Panc1 (cell line): ENCODE measurements at regions of chr6 and their contacts with region 1.

Region 1: DNA sequence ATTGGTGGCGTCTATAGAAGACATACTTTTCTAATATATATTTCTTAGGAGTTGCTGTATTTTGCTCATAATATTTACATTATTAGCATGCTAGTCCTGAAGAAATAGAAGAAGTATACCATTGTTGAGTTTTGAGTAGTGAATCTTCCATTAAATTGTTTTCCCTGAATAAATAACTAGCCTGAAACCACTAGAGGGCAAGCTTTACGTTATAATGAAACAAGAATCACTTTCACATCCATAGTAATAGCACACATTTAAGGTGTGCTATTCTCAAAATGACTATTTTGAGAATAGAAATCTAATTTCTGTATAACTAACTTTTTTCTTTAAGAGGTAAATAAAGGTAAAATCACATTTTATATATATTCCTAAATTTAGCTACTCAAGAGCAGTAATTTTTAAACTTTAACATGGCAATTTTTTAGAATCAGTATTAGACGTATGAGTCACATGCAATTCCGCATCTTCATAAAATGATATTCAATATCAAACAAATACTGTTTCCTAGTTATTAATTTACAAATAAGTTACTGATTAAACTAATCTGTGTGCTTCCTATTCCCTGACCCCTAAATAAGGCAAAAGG is 213.2 kb upstream of the MANEA start:
- DNase-seq: peak; percentile 10
- ATAC-seq: no peak
- H3K4me3 ChIP-seq: no peak overlapping the region
- H3K27ac ChIP-seq: no peak overlapping the region
- H3K4me1 ChIP-seq: no peaks in the 10 kb centered on the region
- H3K27me3 ChIP-seq: no peaks in the 10 kb centered on the region
- CTCF ChIP-seq: peak; percentile 41; the same call in 1 of the 2 replicates

Region 2: GRCh38 chr6:95545226-95545625 is 181.1 kb after region 1 on chr6:
- CTCF ChIA-PET with region 1: no interaction called
- POLR2A ChIA-PET with region 1: no interaction called
- in situ Hi-C with region 1: no loop called
- intact Hi-C with region 1: no loop called
- DNase-seq: no peak
- ATAC-seq: no peak
- H3K4me3 ChIP-seq: no peak overlapping the region
- H3K27ac ChIP-seq: no peak overlapping the region
- H3K4me1 ChIP-seq: no peaks in the 10 kb centered on the region
- H3K27me3 ChIP-seq: no peaks in the 10 kb centered on the region
- CTCF ChIP-seq: no peak

Region 3: GRCh38 chr6:95577304-95578105 is 213.4 kb after region 1 on chr6 and contains the start of gene MANEA:
- CTCF ChIA-PET with region 1: no interaction called
- POLR2A ChIA-PET with region 1: no interaction called
- in situ Hi-C with region 1: no loop called
- intact Hi-C with region 1: no loop called
- DNase-seq: no peak
- ATAC-seq: peak; percentile 96
- H3K4me3 ChIP-seq: peak within 1 kb of the TSS; percentile 95 to 96
- H3K27ac ChIP-seq: peak within 1 kb of the TSS; percentile 99
- H3K4me1 ChIP-seq: peaks cover 16% of the 10 kb centered on the region
- H3K27me3 ChIP-seq: no peaks in the 10 kb centered on the region
- CTCF ChIP-seq: no peak
- total RNA-seq, gene MANEA: 20.1 TPM

Region 4: DNA sequence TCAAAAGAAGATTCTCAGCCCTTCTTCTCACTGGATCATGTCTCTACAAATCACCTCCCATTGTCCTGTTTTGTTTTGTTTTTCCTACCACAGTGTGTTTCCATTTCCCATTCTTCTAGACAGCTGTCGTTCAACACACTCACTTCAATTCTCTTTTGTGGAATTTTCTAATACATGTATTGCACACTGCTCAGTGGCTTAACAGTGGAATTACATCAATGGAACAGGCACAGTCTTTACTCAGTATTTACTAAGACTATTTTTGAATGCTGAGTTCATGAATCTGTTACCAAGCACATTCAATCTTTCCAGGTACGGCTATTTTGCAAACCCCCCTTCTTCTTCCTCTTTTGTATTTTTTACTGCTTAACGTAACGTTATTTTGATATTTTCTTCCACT is 409.0 kb after region 1 on chr6:
- CTCF ChIA-PET with region 1: no interaction called
- POLR2A ChIA-PET with region 1: no interaction called
- in situ Hi-C with region 1: no loop called
- intact Hi-C with region 1: no loop called
- DNase-seq: no peak
- ATAC-seq: no peak
- H3K4me3 ChIP-seq: no peak overlapping the region
- H3K27ac ChIP-seq: no peak overlapping the region
- H3K4me1 ChIP-seq: no peaks in the 10 kb centered on the region
- H3K27me3 ChIP-seq: no peaks in the 10 kb centered on the region
- CTCF ChIP-seq: no peak

Region 5: DNA sequence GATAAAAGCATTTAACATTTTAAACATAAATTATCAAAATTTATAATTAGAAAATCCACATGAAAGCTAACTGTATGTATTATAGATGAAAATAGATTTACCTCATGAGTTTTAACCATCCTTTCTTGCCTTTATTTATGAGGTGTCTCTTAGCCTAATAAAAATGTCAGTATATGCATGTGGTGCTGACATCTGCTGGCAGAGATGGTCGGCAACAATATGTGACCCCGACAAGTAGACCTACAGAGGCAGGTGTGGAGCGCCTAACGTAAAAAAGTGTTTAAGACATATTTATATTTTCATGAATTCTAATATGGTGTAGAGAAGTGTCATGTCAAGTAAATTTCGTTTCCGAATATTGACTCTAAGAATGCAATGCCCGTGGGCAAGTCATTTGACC is 502.6 kb after region 1 on chr6:
- CTCF ChIA-PET with region 1: no interaction called
- POLR2A ChIA-PET with region 1: no interaction called
- in situ Hi-C with region 1: no loop called
- intact Hi-C with region 1: loop called (anchors 10 kb)
- DNase-seq: no peak
- ATAC-seq: no peak
- H3K4me3 ChIP-seq: no peak overlapping the region
- H3K27ac ChIP-seq: no peak overlapping the region
- H3K4me1 ChIP-seq: no peaks in the 10 kb centered on the region
- H3K27me3 ChIP-seq: no peaks in the 10 kb centered on the region
- CTCF ChIP-seq: peak; percentile 66